Dendritic cell treated with granulocyte-macrophage colony-stimulating factor and Interleukin-4, amounts not matched to agents 40 ng/mL and 50 ng/mL, for 4 days (primary cell): ENCODE measurements at regions of chr10 and their contacts with region 1.

Region 1: DNA sequence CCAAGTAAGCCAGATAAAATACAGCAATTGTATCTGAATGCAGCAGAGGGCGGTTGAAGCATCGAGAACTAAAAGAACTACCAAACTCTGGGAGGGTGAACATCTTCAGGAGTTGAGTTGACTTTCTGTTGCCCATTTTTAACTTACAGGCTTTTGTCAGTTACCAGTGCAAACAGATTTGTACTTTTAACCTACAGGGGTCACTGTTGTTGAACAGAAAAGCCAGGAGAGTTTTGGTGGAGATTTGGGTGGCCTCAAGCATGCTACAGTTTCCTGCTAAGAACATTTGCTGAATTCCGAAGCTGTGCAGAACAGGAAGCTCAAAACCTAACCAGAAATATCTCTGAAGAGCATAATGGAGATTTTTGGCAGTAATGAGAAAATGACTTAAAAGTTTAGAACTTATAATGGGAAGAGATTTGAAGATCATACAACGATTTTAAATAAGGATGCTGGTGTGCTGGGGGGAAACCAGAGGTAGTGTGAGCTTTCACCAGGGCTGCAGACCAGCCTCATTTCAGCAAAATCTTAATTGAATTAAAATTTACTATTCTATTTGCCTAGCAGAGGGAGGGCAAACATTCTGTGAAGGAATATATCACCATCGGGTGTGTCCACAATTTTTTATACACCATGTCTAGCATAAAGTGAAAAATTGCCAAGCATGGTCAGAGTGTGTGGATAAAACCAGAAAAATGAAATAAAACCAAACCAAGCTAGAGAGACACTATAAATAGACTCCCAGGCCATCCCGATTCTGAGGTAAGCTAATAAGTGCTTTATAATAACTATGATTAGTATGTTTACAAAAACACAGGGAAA is 208.6 kb upstream of the CCDC6 start:
- H3K4me3 Mint-ChIP-seq: no peak overlapping the region
- H3K27ac Mint-ChIP-seq: no peak overlapping the region
- H3K4me1 Mint-ChIP-seq: no peaks in the 10 kb centered on the region
- H3K27me3 Mint-ChIP-seq: no peaks in the 10 kb centered on the region

Region 2: GRCh38 chr10:60208676-60209269 is 93.8 kb after region 1 on chr10:
- intact Hi-C with region 1: loop called (anchors 5 kb)
- H3K4me3 Mint-ChIP-seq: no peak overlapping the region
- H3K27ac Mint-ChIP-seq: no peak overlapping the region
- H3K4me1 Mint-ChIP-seq: peaks cover 14% of the 10 kb centered on the region
- H3K27me3 Mint-ChIP-seq: no peaks in the 10 kb centered on the region